ENCODE measurements at regions of chr5 and their contacts with region 1.

Region 1: DNA sequence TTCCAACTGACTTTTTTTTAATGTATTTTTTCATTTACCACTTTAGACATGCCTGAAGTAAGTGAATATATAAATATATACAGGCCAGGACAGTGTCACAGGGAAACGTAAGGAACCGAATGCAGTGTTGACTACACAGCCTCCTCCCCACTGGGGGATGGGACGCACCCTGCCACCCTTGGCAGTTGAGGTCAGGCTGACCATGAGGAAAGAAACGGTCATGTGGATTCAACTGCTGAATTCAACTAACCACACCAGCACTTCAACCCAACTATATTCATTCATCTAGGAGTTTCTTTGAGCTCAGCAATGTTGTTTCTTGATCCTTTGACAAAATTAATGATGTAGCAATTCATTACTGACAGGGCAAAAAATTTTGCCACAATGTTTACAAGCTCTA is 108.9 kb downstream of the EFNA5 start:
- DNase-seq: no peak

Region 2: DNA sequence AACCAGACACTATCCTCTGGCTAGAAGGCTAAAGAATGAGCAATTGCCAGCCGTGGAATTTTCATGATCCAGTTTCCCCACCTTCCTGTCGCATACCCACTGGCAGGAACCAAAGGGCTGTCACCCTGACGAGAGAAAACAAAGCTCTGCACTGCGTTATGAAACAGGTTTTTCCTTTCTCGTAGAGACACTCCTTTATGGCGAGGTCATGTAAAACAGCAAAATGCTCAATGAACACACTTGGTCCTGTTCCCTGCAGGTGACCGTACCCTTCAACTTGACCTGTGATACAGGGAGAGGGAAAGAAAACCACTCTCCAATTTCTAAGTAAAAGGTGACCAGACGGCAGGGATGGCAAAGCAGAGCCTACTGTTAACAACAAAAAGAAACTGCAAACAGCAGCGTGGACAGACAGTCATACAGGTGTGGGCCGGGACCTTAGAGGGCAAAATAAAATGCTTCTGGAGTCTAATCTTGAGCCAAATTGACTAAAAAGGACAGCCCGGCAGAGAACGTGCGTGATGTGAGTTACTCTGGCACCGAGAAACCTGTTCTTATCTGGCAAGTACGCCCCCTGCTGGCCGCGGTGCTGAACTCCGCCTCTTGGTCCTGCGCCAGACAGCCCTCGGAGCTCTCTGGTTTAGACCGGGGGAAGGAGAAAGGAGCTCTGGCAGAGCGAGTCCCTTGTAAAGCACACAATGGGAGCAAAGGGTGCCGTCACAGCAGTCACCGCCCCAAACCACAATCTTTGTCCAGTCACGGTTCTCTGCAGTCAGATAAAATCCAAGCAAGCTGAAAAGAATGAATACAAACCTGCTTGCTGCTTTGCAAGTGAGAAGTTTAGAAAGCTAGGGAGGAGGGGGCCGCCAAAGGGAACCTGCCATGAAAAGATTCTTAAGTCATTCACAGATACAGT is 10.0 kb after region 1 on chr5:
- CTCF ChIA-PET with region 1: interaction called, 10 read pairs
- POLR2A ChIA-PET with region 1: interaction called, 6 read pairs
- DNase-seq: peak; percentile 80